ENCODE measurements at regions of chr3 and their contacts with region 1.

Region 1: DNA sequence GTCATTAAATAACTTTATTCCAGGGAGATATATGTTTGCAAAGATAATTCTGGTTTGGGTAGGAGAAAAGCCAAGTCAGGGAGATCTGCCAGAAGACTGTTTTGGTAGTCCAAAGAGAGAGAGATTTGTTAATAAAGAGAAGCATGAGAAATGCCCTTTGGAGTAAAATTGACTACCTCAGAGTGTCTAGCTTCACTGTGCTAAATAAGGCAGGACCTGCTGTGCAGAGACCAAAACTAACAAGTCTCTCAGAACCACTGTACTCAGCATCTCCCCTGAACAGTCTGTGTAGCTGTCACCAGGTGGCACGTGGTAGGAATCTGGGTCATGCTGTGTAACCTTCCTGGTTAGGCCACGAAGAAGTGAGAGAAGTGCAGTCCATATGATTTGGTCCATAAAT is 31.6 kb upstream of the SLC35G2 start:
- DNase-seq: peak; percentile 16
- H3K4me3 ChIP-seq: no peak overlapping the region
- H3K27ac ChIP-seq: peak overlapping the region; percentile 80
- H3K27me3 ChIP-seq: no peaks in the 10 kb centered on the region
- CTCF ChIP-seq: no peak

Region 2: GRCh38 chr3:135792174-135792573 is 995.2 kb before region 1 on chr3:
- in situ Hi-C with region 1: no loop called
- DNase-seq: no peak
- H3K4me3 ChIP-seq: no peak overlapping the region
- H3K27ac ChIP-seq: no peak overlapping the region
- H3K27me3 ChIP-seq: no peaks in the 10 kb centered on the region
- CTCF ChIP-seq: no peak

Region 3: DNA sequence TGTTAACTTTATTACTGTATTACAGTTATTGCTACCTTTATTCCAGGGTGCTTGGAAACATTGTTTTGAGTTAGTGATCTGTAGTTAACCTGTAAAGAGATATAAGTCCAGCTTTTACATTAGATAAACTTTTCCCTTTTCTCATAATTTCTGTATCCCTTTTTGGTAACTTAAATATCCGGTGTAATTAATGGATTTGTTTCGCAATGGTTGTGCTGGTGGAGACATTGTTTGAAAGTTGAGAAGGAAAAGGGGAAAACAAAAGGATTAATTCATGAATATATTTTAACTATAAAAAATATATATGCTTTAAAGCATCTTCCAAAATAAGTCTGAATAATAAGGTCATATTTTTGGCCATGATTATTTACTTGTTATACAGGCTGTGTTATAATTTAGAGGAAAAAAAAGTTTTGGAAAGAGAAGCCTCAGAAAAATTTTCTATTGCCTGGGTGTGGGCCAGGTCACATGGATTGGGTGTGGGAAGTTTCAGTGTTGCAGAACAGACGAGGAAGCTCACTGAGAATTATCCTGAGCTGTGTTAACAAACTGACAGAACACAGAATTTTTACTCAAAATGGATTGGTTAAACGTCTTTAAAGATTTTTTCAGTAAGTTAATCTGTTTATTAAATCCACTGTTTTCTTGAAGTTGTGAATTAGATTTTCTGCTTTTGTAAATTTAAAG is 142.8 kb after region 1 on chr3:
- in situ Hi-C with region 1: no loop called
- DNase-seq: no peak
- H3K4me3 ChIP-seq: no peak overlapping the region
- H3K27ac ChIP-seq: no peak overlapping the region
- H3K27me3 ChIP-seq: no peaks in the 10 kb centered on the region
- CTCF ChIP-seq: no peak

Region 4: GRCh38 chr3:136994772-136995516 is 207.6 kb after region 1 on chr3:
- in situ Hi-C with region 1: loop called (anchors 25 kb)
- DNase-seq: peak; percentile 20
- H3K4me3 ChIP-seq: no peak overlapping the region
- H3K27ac ChIP-seq: no peak overlapping the region
- H3K27me3 ChIP-seq: no peaks in the 10 kb centered on the region
- CTCF ChIP-seq: no peak

Region 5: DNA sequence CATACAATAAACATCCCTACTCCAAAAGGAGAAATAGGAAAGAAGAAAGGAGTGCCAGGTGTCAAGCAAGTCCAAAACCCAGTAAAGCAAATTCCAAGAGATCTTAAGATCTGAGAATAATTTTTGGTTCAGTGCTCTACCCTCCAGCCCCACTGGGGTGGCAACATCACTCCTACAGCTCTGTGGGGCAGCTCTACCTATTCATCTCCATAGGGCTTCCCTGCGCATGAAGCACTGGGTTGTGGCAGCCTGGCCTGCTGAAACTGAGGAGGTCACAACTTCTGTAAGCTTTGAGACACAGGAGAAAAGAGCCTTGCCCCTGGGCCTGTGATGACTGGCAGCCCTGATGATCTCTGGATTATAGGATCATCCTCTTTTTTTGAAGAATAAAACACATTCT is 598.6 kb after region 1 on chr3:
- in situ Hi-C with region 1: no loop called
- DNase-seq: no peak
- H3K4me3 ChIP-seq: no peak overlapping the region
- H3K27ac ChIP-seq: no peak overlapping the region
- H3K27me3 ChIP-seq: no peaks in the 10 kb centered on the region
- CTCF ChIP-seq: no peak